Dendritic cell treated with granulocyte-macrophage colony-stimulating factor and Interleukin-4, amounts not matched to agents 40 ng/mL and 50 ng/mL, for 4 days (primary cell): ENCODE measurements at regions of chr5 and their contacts with region 1.

Region 1: GRCh38 chr5:36264202-36264760 is 22.6 kb upstream of the NADK2 start:
- H3K4me3 Mint-ChIP-seq: no peak overlapping the region
- H3K27ac Mint-ChIP-seq: no peak overlapping the region
- H3K4me1 Mint-ChIP-seq: no peaks in the 10 kb centered on the region
- H3K27me3 Mint-ChIP-seq: peaks cover 2% of the 10 kb centered on the region

Region 2: DNA sequence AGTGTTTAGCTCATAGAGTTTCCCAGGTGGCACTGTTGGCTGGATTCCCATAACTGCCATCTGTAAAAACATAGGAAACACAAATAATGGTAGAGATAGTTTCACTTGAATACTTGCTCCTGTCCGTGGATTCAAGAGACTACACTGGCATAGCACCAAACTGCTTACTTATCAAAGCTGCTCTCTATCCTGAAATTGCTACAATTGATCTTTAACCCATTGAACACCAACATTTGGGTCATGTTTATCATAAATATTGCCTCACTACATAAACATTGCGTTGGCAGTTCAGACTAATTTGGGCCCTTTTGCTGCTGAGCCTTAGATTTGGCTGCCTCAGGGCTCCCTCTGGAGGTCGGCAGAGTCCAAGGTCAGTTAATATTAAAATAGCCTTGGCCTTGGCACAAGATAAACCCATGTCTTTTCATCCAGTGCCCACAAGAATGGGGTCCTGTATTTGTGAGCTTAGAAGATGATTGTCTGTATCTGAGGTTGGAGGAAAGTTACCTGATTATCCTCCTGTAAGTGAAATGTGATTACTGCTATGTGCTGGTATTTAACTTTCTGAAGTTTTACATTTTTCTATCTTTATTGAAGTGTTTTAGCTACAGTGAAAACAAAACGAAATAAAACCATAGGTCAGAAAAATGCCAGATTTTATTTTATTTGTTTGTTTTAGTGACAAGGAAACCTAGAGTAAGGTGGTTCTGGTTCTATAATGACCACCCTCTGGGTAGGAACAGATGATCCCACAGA is 41.5 kb after region 1 on chr5:
- intact Hi-C with region 1: loop called (anchors 2 kb)
- H3K4me3 Mint-ChIP-seq: no peak overlapping the region
- H3K27ac Mint-ChIP-seq: no peak overlapping the region
- H3K4me1 Mint-ChIP-seq: peaks cover 5% of the 10 kb centered on the region
- H3K27me3 Mint-ChIP-seq: peaks cover 2% of the 10 kb centered on the region

Region 3: DNA sequence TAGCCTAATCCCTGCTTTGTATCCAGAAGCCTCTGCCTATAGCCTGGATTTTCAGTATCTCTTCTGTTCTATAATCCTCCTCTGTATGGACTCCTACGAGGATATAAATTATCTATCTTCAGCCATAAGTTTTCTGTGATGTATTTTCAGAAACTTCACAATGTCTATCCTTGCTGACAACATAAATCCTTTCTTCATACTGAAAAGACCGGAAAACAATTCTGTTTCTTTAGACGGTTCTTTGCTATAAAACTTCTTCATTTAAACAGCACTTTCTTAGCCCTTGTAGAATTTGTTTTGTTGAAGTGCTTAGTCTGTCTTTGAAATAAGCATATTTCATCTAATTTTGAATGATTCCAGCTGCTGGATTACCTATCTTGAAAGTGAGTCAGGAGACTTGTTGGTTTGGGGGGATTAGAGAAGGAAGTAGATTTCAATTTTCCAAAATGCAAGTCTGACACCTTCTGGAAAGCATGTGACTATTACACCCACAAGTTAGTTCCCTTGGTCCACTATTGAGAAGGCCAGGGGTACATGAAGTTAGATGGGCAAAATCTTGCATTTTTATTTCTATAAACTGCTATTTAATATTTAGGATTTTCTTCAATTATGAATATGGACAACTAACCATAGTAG is 133.7 kb after region 1 on chr5:
- intact Hi-C with region 1: loop called (anchors 1 kb)
- H3K4me3 Mint-ChIP-seq: no peak overlapping the region
- H3K27ac Mint-ChIP-seq: no peak overlapping the region
- H3K4me1 Mint-ChIP-seq: peaks cover 11% of the 10 kb centered on the region
- H3K27me3 Mint-ChIP-seq: no peaks in the 10 kb centered on the region

Region 4: DNA sequence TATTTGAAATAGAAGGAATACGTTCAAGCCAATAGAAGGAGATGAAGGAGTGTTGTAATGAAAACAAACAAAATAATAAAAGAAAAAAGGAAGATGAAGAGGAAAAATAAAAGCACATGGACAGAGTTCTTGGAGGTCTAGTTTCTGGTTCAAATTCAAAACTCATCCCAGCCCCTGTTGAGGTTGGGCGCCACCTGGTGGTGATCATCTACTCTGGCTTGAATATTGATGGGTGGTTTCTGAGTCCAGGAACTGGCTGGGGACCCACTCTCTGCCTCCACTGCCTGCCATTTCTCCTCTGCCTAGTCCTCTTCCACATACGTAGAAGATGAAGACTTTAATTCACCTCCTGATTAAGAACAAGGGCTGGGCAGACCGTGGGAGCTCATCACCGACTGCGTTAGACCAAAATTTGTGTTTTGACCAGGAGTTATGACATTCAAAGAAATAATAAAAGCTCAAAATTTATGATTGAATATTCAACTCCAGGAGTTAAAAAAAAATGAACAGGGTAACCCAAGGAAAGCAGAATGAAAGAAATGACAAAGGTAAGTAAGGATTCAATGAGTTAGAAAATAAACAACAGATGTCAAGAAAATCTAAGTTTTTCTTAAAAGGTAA is 243.2 kb after region 1 on chr5:
- intact Hi-C with region 1: loop called (anchors 2 kb)
- H3K4me3 Mint-ChIP-seq: no peak overlapping the region
- H3K27ac Mint-ChIP-seq: no peak overlapping the region
- H3K4me1 Mint-ChIP-seq: no peaks in the 10 kb centered on the region
- H3K27me3 Mint-ChIP-seq: peaks cover 2% of the 10 kb centered on the region